OCI-LY7 (cell line): ENCODE measurements at regions of chr19 and their contacts with region 1.

Region 1: GRCh38 chr19:45187421-45188100 is 9.0 kb downstream of the BLOC1S3 start:
- DNase-seq: peak; percentile 83
- H3K4me3 ChIP-seq: no peak overlapping the region
- H3K27ac ChIP-seq: no peak overlapping the region
- H3K4me1 ChIP-seq: peaks cover 8% of the 10 kb centered on the region
- CTCF ChIP-seq: peak; percentile 87

Region 2: GRCh38 chr19:44903602-44904425 is 283.7 kb before region 1 on chr19:
- CTCF ChIA-PET with region 1: no interaction called
- POLR2A ChIA-PET with region 1: no interaction called
- intact Hi-C with region 1: loop called (anchors 5 kb)
- DNase-seq: peak; percentile 64
- H3K4me3 ChIP-seq: no peak overlapping the region
- H3K27ac ChIP-seq: peak overlapping the region; percentile 18
- H3K4me1 ChIP-seq: peaks cover 15% of the 10 kb centered on the region
- CTCF ChIP-seq: peak; percentile 97

Region 3: DNA sequence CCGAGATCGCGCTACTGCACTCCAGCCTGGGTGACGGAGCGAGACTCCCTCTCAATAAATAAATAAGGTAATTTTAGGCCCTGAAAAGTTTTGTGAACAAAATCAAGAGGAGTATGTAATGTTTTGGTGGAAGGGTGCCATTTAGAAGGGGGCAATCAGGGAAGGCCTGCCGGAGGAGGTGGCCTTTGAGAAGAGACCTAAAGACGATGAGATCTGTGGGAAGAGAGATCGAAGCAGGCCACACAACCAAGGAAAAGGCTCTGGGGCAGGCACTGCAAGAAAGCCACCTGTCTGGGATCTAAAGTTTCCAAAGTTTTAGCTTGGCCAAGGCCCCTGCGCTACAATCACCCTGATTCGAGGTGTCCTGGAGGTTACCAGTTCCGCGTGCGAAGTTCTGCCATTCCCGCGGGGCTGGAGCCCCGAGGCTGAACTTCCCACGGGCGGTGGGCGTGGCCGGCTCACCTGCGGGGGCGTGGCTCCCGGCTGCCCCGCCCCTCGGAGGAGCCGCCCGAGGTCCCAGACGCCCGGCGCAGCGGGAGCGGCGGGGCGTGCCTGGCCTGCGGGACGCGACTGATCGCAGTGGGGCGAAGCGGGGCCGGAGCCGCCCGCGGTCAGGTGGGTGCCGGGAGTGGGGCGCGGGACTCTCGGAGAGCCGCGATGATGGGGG is 152.8 kb after region 1 on chr19 and contains the start of gene KLC3:
- CTCF ChIA-PET with region 1: no interaction called
- POLR2A ChIA-PET with region 1: no interaction called
- intact Hi-C with region 1: loop called (anchors 2 kb)
- DNase-seq: peak; percentile 52
- H3K4me3 ChIP-seq: peak within 1 kb of the TSS; percentile 56
- H3K27ac ChIP-seq: no peak within 1 kb of the TSS
- H3K4me1 ChIP-seq: peaks cover 8% of the 10 kb centered on the region
- CTCF ChIP-seq: no peak
- total RNA-seq, gene KLC3: not detected in 2 replicates